SK-N-SH (cell line): ENCODE measurements at regions of chr3 and their contacts with region 1.

Region 1: GRCh38 chr3:179604321-179605078 is at the starts of genes MRPL47 and NDUFB5:
- DNase-seq: peak; percentile 89
- H3K4me3 ChIP-seq: peak within 1 kb of the TSS; percentile 60 to 74
- H3K27ac ChIP-seq: peak within 1 kb of the TSS; percentile 84
- H3K4me1 ChIP-seq: peaks cover 6 to 11% of the 10 kb centered on the region in 2 experiments; a peak in 2 of 4 replicates
- H3K27me3 ChIP-seq: no peaks in the 10 kb centered on the region
- CTCF ChIP-seq: no peak
- EP300 ChIP-seq: no peak
- RAD21 ChIP-seq: no peak
- polyA plus RNA-seq, gene MRPL47: 37.8 and 44.3 TPM in 2 replicates
- polyA plus RNA-seq, gene NDUFB5: 31.3 and 35.3 TPM in 2 replicates

Region 2: DNA sequence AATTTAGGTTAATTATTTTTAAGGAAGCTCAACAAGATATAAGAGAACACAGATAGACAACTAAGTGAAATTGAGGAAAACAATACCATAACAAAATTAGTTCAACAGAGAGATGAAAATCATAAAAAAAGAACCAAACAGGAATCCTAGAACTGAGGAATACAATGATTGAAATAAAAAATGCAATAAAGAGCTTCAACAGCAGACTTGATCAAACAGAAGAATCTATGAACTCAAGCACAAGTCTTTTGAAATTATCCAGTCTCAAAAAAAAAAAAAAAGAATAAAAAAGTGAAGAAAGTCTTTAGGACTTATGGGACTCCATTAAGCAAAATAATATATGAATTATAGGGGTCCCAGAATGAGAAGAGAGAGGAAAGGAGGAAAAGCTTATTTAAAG is 111.2 kb before region 1 on chr3:
- CTCF ChIA-PET with region 1: no interaction called
- POLR2A ChIA-PET with region 1: no interaction called
- DNase-seq: no peak
- H3K4me3 ChIP-seq: no peak overlapping the region
- H3K27ac ChIP-seq: no peak overlapping the region
- H3K4me1 ChIP-seq: no peaks in the 10 kb centered on the region
- H3K27me3 ChIP-seq: no peaks in the 10 kb centered on the region
- CTCF ChIP-seq: no peak
- EP300 ChIP-seq: no peak
- RAD21 ChIP-seq: no peak

Region 3: DNA sequence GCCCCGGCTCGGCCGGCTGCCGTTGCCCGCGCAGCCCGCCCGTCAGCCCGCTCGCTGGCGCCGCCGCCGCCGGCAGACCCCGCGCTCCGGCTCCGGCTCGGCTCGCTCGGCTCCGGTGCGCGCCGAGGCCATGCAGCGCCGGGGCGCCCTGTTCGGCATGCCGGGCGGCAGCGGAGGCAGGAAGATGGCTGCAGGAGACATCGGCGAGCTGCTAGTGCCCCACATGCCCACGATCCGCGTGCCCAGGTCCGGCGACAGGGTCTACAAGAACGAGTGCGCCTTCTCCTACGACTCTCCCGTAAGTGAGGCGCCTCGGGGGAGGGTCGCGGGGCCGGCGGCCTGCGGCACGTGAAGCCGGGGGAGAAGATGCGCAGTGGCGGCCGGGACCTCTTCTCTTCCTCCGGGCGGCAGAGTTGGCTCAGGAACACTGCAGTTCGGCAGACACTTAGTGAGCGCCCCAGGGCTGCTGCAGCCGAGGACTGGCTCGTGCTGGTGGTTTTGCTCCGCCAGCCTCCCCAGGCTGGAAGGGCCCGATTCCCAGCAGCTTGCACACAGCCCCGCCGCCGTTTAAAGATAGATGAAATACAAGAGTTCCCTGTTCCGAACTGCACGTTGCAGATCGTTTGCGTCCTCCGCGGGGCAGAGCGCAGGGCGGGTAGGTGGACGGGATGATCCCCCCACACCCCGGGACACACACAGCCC is 48.7 kb after region 1 on chr3:
- CTCF ChIA-PET with region 1: no interaction called
- POLR2A ChIA-PET with region 1: interaction called, 11 read pairs
- DNase-seq: peak; percentile 82
- H3K4me3 ChIP-seq: peak overlapping the region; percentile 80 to 95
- H3K27ac ChIP-seq: peak overlapping the region; percentile 90 to 93
- H3K4me1 ChIP-seq: peaks cover 4 to 10% of the 10 kb centered on the region in 2 experiments; a peak in 2 of 4 replicates
- H3K27me3 ChIP-seq: no peaks in the 10 kb centered on the region
- CTCF ChIP-seq: peak; percentile 11; the same call in 1 of the 2 replicates
- EP300 ChIP-seq: 0 out of 4 replicates have a peak, but pooled peaks of 1 of the 2 experiments have one; percentile 16
- RAD21 ChIP-seq: peak; percentile 46